Heart right ventricle (tissue), 16 donors: ENCODE measurements at regions of chr11 and their contacts with region 1.

Region 1: DNA sequence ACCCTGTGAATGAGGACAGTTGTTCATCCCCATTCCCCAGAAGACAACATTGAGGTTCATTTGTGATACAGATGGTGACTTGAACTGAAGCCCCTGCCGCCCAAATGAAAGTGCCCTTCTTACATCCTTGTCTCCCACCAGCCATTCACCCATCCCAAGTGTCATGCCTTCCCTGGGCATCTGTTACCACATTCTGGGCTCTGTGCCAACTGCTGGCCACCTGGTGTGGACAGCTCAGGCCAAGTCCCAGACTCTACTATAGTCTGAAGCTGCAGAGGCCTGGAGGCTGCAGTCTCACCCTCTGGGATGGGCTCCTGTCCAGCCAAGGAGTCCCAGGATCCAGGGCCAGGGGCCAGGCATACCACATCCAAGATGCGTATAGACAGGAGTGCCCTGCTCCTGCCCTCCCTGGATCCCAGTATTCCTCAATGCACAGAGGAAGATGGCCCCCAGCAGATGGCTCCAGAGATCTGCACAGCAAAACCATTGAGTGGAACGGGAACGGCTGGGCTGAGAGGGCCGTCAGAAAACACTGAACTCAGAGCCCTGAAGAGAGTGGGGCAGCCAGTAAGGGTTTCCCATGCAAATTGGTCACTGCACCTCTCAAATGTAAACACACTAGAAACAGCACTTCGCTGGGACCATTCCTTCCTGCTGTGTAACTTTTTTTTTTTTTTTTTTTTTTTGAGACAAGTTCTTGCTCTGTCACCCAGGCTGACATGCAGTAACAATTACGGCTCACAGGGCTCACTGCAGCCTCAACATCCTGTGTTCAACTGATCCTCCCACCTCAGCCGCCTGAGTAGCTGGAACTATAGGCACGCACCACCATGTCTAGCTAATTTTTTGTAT is 22.8 kb downstream of the ARRB1 start:
- DNase-seq: peak; percentile 63 to 79
- ATAC-seq: peak; percentile 73 to 92 (median 86)
- H3K4me3 ChIP-seq: no peak overlapping the region
- H3K27ac ChIP-seq: peak overlapping the region in 3 of 10 donors; percentile 4 to 66 (median 48)
- H3K4me1 ChIP-seq: peaks cover 7 to 69% (median 39%) of the 10 kb centered on the region in 9 donors
- H3K27me3 ChIP-seq: no peaks in the 10 kb centered on the region
- CTCF ChIP-seq: peak; percentile 52 to 80 (median 71)

Region 2: DNA sequence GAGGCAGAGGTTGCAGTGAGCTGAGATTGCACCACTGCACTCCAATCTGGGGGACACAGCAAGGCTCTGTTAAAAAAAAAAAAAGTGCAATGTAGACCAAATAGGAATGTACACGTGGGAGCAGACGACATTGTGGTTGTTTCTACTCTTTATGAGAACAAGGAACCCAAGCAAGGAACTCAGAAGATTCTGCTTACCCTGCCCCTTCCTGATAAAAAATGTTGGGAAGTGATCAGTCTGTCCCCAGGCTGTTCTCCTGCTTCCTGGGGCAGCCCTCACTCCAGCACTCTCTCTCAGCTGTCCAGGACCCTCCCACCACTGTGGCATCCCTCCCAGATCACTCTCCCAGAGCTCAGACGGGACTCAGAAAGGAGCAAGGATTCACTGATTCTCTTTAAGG is 146.0 kb before region 1 on chr11:
- intact Hi-C with region 1: no loop called
- DNase-seq: no peak
- ATAC-seq: peak in 7 of 8 donors; percentile 19 to 72 (median 51)
- H3K4me3 ChIP-seq: no peak overlapping the region
- H3K27ac ChIP-seq: peak overlapping the region in 4 of 10 donors; percentile 61 to 86 (median 67)
- H3K4me1 ChIP-seq: peaks cover 0 to 78% (median 25%) of the 10 kb centered on the region in 9 donors
- H3K27me3 ChIP-seq: no peaks in the 10 kb centered on the region
- CTCF ChIP-seq: no peak

Region 3: GRCh38 chr11:75383246-75383645 is 54.6 kb after region 1 on chr11:
- intact Hi-C with region 1: loop called (anchors 1 to 10 kb)
- DNase-seq: no peak
- ATAC-seq: no peak
- H3K4me3 ChIP-seq: no peak overlapping the region
- H3K27ac ChIP-seq: peak overlapping the region in 1 of 10 donors; percentile 60
- H3K4me1 ChIP-seq: peaks cover 0 to 34% (median 2%) of the 10 kb centered on the region in 9 donors
- H3K27me3 ChIP-seq: no peaks in the 10 kb centered on the region
- CTCF ChIP-seq: no peak

Region 4: DNA sequence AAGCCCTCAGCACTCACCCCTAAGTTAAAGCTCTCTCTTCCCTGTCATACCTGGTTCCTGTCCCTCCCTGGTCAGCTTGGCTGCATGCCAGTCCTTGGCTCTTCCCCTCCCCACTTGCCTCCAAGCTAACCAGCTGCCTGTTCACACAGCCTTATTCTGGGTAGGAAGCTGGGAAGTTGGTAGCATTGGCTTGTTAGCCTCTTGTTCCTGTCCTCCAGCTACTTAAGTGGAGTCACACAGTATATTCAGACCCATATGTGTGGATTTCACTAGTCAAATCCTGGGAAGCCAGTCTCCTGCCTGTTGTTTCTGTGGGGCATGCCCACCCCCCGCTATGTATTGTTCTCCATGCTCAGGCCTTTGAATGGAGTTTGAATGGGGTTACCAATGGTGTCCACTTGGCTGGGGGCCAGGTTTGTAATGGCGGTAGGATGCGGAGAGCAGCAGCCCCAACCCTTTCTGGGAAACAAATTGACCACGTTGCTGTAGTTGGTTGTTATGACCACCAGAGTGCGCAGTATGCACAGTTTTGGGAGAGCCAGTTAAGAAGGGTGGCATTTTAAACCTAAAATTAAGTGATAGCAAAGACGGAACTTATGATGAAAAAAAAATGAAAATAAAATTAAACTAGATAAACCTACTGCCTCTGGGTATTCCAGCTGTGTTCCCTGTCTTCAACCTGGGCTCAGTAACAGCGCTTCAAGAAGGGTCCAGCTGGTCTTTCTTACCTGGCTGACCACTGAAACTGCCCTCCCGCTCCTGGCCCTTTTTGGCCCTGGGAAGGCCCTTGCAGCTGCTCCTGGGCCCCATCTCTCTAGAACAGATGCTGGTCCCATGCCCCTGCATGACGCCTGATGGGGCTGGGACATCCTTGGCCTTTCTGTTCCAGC is 60.0 kb after region 1 on chr11:
- intact Hi-C with region 1: loop called (anchors 1 to 10 kb)
- DNase-seq: peak; percentile 49 to 71
- ATAC-seq: peak; percentile 46 to 76 (median 64)
- H3K4me3 ChIP-seq: no peak overlapping the region
- H3K27ac ChIP-seq: peak overlapping the region in 4 of 10 donors; percentile 2 to 50 (median 36)
- H3K4me1 ChIP-seq: peaks cover 3 to 24% (median 7%) of the 10 kb centered on the region in 9 donors
- H3K27me3 ChIP-seq: no peaks in the 10 kb centered on the region
- CTCF ChIP-seq: peak; percentile 59 to 90 (median 86)